ENCODE measurements at regions of chr12 and their contacts with region 1.

Region 1: DNA sequence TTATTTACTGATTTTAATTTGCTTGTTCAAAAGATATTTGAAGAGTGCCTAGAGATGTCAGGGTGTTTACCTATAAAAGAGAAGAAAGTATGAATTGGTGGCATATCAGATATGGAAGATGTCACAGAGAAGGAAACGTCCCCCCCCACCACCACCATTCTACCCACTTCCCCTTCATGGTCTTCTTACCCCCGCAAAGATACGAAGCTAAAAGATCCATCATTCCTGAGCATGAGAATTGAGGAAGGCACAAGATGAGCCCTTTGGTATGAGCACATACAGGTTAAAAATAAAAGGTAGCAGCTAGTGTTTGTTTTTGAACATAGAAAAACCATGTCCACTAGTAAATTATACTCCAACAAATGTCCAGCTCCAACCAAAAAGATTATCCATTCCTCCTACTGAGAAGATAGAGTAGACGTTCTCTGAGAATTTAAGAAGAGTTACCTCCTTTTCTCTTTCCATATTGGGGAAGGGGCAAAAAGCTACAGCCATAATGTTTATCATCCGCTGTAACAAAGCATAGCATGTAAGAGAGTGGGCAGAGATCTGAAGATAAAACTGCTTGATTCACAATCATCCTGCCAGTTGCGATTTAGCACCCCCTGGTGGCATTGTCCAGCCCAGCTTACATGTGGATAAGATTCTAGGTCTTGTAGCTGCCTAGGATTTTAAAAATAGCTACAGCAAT is 29.1 kb downstream of the NFYB start:
- DNase-seq: peak; percentile 32 to 67 (median 54)
- H3K4me3 ChIP-seq: no peak overlapping the region
- H3K27ac ChIP-seq: no peak overlapping the region
- H3K4me1 ChIP-seq: no peaks in the 10 kb centered on the region
- H3K27me3 ChIP-seq: no peaks in the 10 kb centered on the region
- CTCF ChIP-seq: peak; percentile 36 to 60 (median 49)
- EP300 ChIP-seq: no peak
- POLR2A ChIP-seq: no peak

Region 2: DNA sequence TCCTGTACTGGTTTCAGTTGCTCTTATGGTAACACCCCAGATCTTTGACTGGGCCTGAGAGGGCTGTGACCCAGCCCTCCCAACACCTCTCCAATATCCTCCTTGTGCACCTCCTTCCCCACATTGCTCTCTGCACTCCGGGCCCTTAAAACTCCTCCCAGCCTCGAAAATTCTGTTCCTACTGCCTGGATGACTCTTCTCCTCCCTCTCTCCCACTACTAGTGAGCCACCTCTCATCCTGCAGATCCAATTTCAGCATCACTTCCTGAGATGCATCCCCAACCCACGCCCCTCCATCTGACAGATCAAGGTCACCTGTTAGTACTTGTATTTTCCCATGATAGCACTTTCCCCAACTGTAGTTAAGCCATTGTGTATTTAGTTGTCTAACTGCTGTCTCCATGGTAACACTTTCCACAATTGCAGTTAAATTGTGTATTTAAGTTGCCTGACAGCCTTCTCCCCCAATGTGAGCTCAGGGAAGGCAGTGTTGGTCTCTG is 256.4 kb before region 1 on chr12:
- intact Hi-C with region 1: no loop called
- DNase-seq: no peak
- H3K4me3 ChIP-seq: no peak overlapping the region
- H3K27ac ChIP-seq: no peak overlapping the region
- H3K4me1 ChIP-seq: no peaks in the 10 kb centered on the region
- H3K27me3 ChIP-seq: no peaks in the 10 kb centered on the region
- CTCF ChIP-seq: no peak
- EP300 ChIP-seq: no peak
- POLR2A ChIP-seq: no peak

Region 3: GRCh38 chr12:103884316-103884715 is 224.6 kb before region 1 on chr12:
- intact Hi-C with region 1: loop called in 1 of 4 experiments (anchors 10 kb)
- DNase-seq: peak in 2 of 5 donors; percentile 24 to 39
- H3K4me3 ChIP-seq: no peak overlapping the region
- H3K27ac ChIP-seq: no peak overlapping the region
- H3K4me1 ChIP-seq: no peaks in the 10 kb centered on the region
- H3K27me3 ChIP-seq: no peaks in the 10 kb centered on the region
- CTCF ChIP-seq: peak in 1 of 3 donors; percentile 37
- EP300 ChIP-seq: no peak
- POLR2A ChIP-seq: no peak

Region 4: GRCh38 chr12:104049903-104050356 is 59.0 kb before region 1 on chr12 and contains the start of gene GLT8D2:
- intact Hi-C with region 1: loop called in 1 of 4 experiments (anchors 10 kb)
- DNase-seq: peak; percentile 71 to 83 (median 74)
- H3K4me3 ChIP-seq: peak within 1 kb of the TSS; percentile 49
- H3K27ac ChIP-seq: peak within 1 kb of the TSS in 1 of 2 donors; percentile 82
- H3K4me1 ChIP-seq: peaks cover 11% of the 10 kb centered on the region
- H3K27me3 ChIP-seq: no peaks in the 10 kb centered on the region
- CTCF ChIP-seq: no peak
- EP300 ChIP-seq: no peak
- POLR2A ChIP-seq: no peak
- total RNA-seq, gene GLT8D2: 21.1 to 38.4 (median 32.9) TPM

Measured in ovary (tissue), 10 donors.